Activated CD4-positive, alpha-beta T cell treated with anti-CD3 and anti-CD28 coated beads for 36 hours (primary cell): ENCODE measurements at regions of chr19 and their contacts with region 1.

Region 1: DNA sequence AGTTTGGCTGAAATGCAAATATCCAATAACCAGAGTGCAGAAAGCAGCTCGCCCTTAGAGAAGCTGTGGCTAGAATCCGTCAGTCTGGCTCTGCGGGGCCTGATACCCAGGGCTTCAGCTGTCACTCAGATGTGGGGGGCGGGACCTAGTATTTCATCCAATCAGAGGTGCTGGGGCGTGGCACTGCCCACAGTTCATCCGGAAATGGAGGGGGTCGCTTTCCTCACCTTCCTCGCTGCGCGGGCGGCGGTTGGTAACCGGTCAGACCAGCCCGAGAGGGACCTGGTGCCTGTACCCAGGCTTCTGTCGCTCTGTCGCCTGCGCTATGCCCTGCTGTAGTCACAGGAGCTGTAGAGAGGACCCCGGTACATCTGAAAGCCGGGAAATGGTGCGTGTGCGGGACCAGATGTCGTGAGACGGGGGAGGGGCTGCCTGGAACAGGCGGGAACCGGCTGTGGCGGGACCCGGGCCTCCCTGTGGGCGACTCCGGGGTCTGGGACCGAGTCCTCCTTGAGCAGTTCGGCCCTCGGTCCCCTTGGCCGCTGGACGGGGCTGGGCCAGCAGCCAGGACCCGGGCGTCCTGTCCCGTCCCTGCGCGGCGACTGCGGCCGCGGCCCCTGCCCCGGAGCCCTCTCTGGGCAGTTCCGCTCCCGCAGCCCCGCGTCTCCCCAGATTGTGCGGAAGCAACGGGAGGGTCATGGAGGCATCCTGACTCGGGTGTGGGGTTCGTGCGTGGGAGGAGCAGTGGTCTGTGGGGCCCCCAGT is at the start of gene ZNF700:
- DNase-seq: peak; percentile 97
- ATAC-seq: peak; percentile 92
- H3K4me3 Mint-ChIP-seq: peak within 1 kb of the TSS; percentile 81
- H3K27ac Mint-ChIP-seq: peak within 1 kb of the TSS; percentile 99
- H3K4me1 Mint-ChIP-seq: peaks cover 40% of the 10 kb centered on the region
- H3K27me3 Mint-ChIP-seq: no peaks in the 10 kb centered on the region
- total RNA-seq, gene ZNF700: 13.3 to 14.5 TPM

Region 2: GRCh38 chr19:11597202-11598102 is 327.6 kb before region 1 on chr19 and contains the start of gene ZNF627:
- CTCF ChIA-PET with region 1: no interaction called
- POLR2A ChIA-PET with region 1: no interaction called
- intact Hi-C with region 1: loop called in 1 of 2 experiments (anchors 1 kb)
- DNase-seq: peak; percentile 99
- ATAC-seq: peak; percentile 100
- H3K4me3 Mint-ChIP-seq: peak within 1 kb of the TSS; percentile 97
- H3K27ac Mint-ChIP-seq: peak within 1 kb of the TSS; percentile 91
- H3K4me1 Mint-ChIP-seq: peaks cover 34% of the 10 kb centered on the region
- H3K27me3 Mint-ChIP-seq: no peaks in the 10 kb centered on the region
- total RNA-seq, gene ZNF627: 6.4 to 6.7 TPM

Region 3: DNA sequence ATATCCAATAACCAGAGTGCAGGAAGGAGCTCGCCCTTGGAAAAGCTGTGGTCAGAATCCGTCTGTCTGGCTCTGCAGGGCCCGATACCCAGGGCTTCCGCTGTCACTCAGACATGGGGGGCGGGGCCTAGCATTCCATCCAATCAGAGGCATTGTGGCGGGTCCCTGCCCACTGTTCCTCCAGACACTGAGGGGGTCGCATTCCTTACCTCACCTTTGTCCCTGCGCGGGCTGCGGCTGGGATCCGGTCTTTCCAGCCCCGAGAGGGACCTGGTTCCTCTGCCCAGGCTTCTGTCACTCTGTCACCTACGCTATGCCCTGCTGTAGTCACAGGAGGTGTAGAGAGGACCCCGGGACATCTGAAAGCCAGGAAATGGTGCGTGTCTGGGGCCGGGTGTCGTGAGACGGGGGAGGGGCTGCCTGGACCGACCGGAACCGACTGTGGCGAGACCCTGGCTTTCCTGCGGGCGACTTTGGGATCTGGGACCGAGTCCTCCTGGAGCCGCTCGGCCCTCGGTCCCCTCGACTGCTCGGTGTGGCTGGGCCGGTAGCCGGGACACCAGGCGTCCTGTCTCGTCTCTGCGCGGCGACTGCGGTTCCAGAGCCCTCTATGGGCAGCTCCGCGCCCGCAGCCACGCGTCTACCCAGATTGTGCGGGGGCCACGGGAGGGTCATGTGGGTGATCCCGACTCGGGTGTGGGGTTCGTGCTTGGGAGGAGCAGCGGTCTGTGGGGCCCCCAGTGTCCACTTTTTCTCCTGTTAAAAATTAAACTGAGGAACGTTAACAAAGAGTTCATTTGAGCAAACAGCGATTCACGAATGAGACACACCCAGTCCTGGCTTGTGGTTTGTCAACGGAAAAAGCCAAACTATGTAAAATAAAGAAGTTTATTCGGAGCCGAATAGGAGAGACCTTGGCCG is 37.2 kb before region 1 on chr19 and contains the start of gene ZNF69:
- CTCF ChIA-PET with region 1: interaction called, 17 read pairs
- POLR2A ChIA-PET with region 1: no interaction called
- intact Hi-C with region 1: loop called (anchors 1 to 2 kb)
- DNase-seq: peak; percentile 78
- ATAC-seq: peak; percentile 92
- H3K4me3 Mint-ChIP-seq: peak within 1 kb of the TSS; percentile 83
- H3K27ac Mint-ChIP-seq: peak within 1 kb of the TSS; percentile 84
- H3K4me1 Mint-ChIP-seq: peaks cover 20% of the 10 kb centered on the region
- H3K27me3 Mint-ChIP-seq: no peaks in the 10 kb centered on the region
- total RNA-seq, gene ZNF69: 2.4 to 2.5 TPM

Region 4: GRCh38 chr19:11987405-11988281 is 62.6 kb after region 1 on chr19:
- CTCF ChIA-PET with region 1: interaction called, 44 read pairs
- POLR2A ChIA-PET with region 1: interaction called, 18 read pairs
- intact Hi-C with region 1: loop called (anchors 1 kb)
- DNase-seq: peak; percentile 98
- ATAC-seq: peak; percentile 98
- H3K4me3 Mint-ChIP-seq: peak overlapping the region; percentile 86
- H3K27ac Mint-ChIP-seq: peak overlapping the region; percentile 92
- H3K4me1 Mint-ChIP-seq: peaks cover 18% of the 10 kb centered on the region
- H3K27me3 Mint-ChIP-seq: no peaks in the 10 kb centered on the region

Region 5: GRCh38 chr19:12052497-12053169 is 127.6 kb after region 1 on chr19 and contains the start of gene ZNF878:
- CTCF ChIA-PET with region 1: interaction called, 7 read pairs
- POLR2A ChIA-PET with region 1: no interaction called
- intact Hi-C with region 1: loop called (anchors 1 to 5 kb)
- DNase-seq: peak; percentile 82
- ATAC-seq: peak; percentile 95
- H3K4me3 Mint-ChIP-seq: peak within 1 kb of the TSS; percentile 66
- H3K27ac Mint-ChIP-seq: peak within 1 kb of the TSS; percentile 2
- H3K4me1 Mint-ChIP-seq: peaks cover 9% of the 10 kb centered on the region
- H3K27me3 Mint-ChIP-seq: peaks cover 14% of the 10 kb centered on the region
- total RNA-seq, gene ZNF878: 1.1 TPM

Region 6: DNA sequence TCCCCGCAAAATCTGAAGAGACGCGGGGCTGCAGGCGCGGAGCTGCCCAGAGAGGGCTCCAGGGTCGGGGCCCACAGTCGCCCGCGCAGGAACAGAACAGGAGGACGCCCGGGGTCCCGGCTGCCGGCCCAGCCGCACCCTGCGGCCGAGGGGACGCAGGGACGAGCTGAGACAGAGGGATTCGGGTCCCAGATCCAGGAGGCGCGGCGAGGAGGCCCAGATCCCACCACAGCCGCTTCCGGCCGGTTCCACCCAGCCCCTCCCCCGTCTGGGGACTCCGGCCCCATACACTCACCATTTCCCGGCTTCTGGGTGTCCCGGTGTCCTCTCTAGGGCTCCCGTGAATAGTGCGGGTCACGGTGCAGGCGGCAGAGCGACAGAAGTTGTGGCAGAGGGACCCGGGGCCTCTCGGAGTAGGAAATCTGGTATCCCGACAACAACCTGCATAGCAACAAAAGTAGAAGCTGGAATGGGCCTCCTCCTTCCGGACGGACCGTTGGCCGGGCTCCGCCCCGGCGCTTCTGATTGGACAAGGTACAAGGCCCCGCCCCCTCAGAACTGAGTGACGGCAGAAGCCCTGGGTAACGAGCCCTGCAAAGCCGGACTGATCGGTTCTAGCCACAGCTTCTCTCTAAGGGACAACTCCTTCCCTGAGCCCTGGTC is 214.9 kb after region 1 on chr19 and contains the start of gene ZNF20:
- CTCF ChIA-PET with region 1: interaction called, 19 read pairs
- POLR2A ChIA-PET with region 1: no interaction called
- intact Hi-C with region 1: loop called (anchors 1 kb)
- DNase-seq: peak; percentile 95
- ATAC-seq: peak; percentile 93
- H3K4me3 Mint-ChIP-seq: peak within 1 kb of the TSS; percentile 91
- H3K27ac Mint-ChIP-seq: peak within 1 kb of the TSS; percentile 73
- H3K4me1 Mint-ChIP-seq: peaks cover 32% of the 10 kb centered on the region
- H3K27me3 Mint-ChIP-seq: no peaks in the 10 kb centered on the region
- total RNA-seq, gene ZNF20: 3.2 to 3.3 TPM

Region 7: GRCh38 chr19:12187625-12188024 is 262.6 kb after region 1 on chr19:
- CTCF ChIA-PET with region 1: no interaction called
- POLR2A ChIA-PET with region 1: no interaction called
- intact Hi-C with region 1: no loop called
- DNase-seq: no peak
- ATAC-seq: no peak
- H3K4me3 Mint-ChIP-seq: no peak overlapping the region
- H3K27ac Mint-ChIP-seq: no peak overlapping the region
- H3K4me1 Mint-ChIP-seq: peaks cover 7% of the 10 kb centered on the region
- H3K27me3 Mint-ChIP-seq: no peaks in the 10 kb centered on the region

Region 8: DNA sequence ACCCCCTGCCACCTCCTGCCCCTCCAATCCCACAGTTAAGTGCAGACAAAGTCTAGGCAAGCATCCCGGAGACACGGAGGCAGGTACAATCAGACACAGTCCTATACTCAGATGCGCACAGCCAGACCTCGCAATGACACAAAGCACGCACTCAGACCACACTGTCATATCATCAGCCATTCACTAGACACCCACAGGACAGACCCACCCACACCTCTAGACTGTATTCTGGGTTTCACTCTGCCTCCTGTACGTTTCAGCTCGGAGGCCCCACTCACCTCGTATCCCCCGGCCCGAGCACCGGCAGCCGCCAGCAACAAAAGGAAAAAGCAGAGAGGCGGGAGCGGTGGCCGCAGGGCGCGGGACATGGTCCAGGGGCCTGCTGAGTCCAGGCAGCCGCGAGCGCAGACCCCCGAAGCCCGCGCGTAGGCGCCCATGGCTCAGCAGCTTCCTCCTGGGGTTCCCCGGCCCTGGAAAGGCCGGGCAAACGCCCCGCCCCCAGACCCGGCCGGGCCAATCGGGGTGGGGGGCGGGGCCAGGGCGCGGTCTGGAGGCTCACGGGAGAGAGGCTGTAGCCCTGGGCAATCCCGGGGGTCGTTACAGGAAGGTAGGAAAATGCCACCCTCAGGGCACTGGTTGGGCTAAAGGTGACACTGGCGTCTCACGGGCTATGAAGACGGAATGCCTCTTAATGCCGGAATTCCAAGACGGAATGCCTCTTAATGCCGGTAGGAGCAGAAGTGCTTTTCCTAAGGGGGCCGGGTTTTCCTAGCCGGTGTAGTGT is 741.4 kb after region 1 on chr19 and contains the starts of genes MAN2B1 and WDR83:
- CTCF ChIA-PET with region 1: no interaction called
- POLR2A ChIA-PET with region 1: no interaction called
- intact Hi-C with region 1: loop called in 1 of 2 experiments (anchors 5 kb)
- DNase-seq: peak; percentile 90
- ATAC-seq: peak; percentile 73
- H3K4me3 Mint-ChIP-seq: peak within 1 kb of the TSS; percentile 86
- H3K27ac Mint-ChIP-seq: peak within 1 kb of the TSS; percentile 83
- H3K4me1 Mint-ChIP-seq: peaks cover 43% of the 10 kb centered on the region
- H3K27me3 Mint-ChIP-seq: no peaks in the 10 kb centered on the region
- total RNA-seq, gene MAN2B1: 118 to 154 TPM
- total RNA-seq, gene WDR83: 13.5 to 19.5 TPM